MCF 10A (cell line): ENCODE measurements at regions of chr17 and their contacts with region 1.

Region 1: DNA sequence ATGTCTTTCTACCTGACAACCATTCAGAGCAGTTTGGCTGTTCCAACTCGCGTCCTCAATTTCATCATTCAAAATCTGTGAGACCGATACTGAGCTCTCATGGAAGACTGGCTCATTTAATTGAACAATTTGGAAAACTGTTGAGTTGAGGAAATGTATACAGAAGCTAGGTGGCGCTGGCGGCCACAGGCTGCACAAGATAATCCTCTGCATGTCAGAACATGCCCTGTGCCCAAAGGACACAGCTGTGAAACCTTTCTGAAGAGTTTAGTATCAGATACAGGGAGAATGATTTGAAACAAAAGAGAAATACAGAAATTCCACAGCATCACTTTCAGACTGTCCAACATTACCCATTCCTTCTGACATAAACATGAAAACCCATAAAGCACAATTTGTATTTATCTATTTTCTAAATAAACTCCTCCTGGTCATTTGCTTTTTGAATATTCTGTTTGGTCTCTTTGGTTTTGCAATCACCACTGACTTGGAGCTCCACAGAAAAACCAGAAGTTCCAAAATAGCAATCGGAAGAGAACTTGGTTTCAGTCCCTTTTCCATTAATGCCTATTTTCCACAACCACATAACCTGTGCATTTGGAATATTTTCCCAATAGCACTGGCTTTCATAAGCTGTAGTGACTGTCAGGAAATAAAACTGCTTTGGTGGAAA is 192.8 kb downstream of the MAP2K6 start:
- DNase-seq: peak; percentile 84
- H3K4me3 Mint-ChIP-seq: peak overlapping the region; percentile 13
- H3K27ac Mint-ChIP-seq: peak overlapping the region; percentile 97
- H3K4me1 Mint-ChIP-seq: peaks cover 30% of the 10 kb centered on the region
- H3K27me3 Mint-ChIP-seq: no peaks in the 10 kb centered on the region
- CTCF ChIP-seq: peak; percentile 83

Region 2: DNA sequence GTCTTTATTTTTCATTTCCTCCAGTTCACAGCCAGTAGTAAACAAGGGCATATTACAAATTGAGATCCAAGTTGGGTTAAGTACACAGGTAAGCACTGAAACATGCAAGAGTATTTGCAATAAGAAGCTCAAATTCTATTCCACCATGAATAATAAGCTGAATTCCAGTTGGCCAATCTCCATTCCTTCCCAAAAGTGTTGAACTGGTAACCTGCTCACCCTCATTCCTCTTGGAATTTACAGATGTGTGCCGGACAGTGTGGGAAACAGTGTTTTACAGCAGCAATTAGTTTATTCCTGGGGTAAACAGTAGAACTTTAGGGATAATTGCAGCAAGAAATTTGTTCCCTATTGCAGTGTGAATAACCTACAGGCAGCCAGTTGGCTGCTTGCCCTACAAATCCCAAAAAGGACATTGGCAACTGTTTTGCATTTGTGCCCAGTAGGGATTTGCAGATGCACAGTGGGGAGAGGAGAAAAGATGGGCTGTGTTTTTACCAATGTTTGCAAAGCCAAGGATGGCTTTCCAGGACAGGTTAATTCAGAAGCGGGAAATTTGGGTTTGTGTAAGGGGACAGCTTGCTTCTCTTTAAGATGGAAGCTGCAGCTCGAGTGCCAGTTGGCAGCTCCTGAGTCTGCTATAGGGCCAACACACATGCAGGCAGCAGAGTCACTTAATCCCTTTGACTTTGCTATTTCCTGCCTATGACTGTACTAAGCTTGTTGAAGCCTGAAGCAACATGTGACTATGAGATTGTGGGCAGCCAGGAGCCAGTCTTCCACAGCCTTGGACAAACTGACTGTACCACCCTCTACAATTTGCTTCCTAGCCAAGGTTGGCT is 126.1 kb after region 1 on chr17:
- CTCF ChIA-PET with region 1: interaction called, 24 read pairs
- POLR2A ChIA-PET with region 1: interaction called, 55 read pairs
- intact Hi-C with region 1: no loop called
- DNase-seq: peak; percentile 93
- H3K4me3 Mint-ChIP-seq: peak overlapping the region; percentile 37
- H3K27ac Mint-ChIP-seq: peak overlapping the region; percentile 90
- H3K4me1 Mint-ChIP-seq: peaks cover 36% of the 10 kb centered on the region
- H3K27me3 Mint-ChIP-seq: no peaks in the 10 kb centered on the region
- CTCF ChIP-seq: no peak

Region 3: DNA sequence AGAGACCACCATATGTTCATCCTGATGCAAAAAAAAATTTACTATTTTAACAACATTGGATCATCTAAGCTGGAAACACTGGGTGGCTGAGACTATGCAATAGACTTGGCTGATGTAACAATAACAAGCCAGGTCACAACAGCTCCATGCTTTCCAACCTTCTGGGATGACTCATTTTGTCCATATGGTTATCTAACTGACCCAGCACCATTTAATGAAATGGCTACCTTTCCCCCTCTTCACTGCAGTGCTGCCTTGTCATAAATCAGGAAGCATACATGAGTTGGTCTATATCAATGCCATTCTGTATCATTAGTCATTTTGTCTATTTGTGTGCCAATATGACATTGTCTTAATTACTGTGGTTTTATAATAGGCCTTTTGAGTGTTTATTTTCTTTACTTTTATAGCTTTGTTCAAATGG is 250.1 kb after region 1 on chr17:
- CTCF ChIA-PET with region 1: no interaction called
- POLR2A ChIA-PET with region 1: interaction called, 3 read pairs
- intact Hi-C with region 1: loop called (anchors 10 kb)
- DNase-seq: peak; percentile 85
- H3K4me3 Mint-ChIP-seq: no peak overlapping the region
- H3K27ac Mint-ChIP-seq: peak overlapping the region; percentile 85
- H3K4me1 Mint-ChIP-seq: peaks cover 13% of the 10 kb centered on the region
- H3K27me3 Mint-ChIP-seq: no peaks in the 10 kb centered on the region
- CTCF ChIP-seq: no peak

Region 4: DNA sequence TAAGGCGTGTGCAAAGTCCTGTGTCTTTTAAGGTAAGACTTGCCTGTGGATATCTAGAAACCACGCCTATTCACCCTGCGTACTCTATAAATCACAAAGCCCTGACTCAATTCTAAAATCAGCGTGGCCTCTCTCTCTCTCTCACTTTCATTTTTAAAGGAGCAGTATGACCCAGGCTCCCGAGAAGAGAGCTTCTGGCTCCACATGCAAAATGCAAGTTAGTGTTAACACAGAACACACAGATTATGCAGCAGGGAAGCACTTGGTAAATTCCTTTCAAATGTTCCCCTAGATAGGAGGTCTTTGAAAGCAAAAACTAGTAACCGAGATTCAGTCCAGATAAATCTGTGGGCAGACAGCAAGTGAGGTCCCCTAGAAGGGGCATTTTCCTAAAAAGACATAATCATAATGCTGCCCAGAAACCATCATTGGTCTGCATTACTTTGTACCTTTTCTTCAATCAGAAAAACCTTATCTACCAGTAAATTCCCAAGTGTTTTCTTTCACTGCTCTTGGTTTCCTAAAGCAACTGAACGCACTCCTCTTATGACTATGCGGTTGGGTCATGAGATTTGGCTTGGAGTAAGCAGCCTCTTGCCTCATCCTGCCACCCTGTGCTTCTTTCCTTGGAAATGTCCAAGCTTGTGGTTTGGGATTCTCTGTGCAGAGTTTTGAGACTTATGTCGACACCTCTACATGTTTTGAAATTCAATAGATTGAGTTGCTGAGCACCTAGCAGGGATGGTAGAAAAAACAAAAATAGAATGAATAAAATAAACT is 530.3 kb after region 1 on chr17:
- CTCF ChIA-PET with region 1: interaction called, 90 read pairs
- POLR2A ChIA-PET with region 1: interaction called, 70 read pairs
- intact Hi-C with region 1: loop called (anchors 1 kb)
- DNase-seq: peak; percentile 96
- H3K4me3 Mint-ChIP-seq: peak overlapping the region; percentile 77
- H3K27ac Mint-ChIP-seq: peak overlapping the region; percentile 98
- H3K4me1 Mint-ChIP-seq: peaks cover 28% of the 10 kb centered on the region
- H3K27me3 Mint-ChIP-seq: no peaks in the 10 kb centered on the region
- CTCF ChIP-seq: no peak

Region 5: GRCh38 chr17:70168977-70169708 is 561.8 kb after region 1 on chr17 and contains the start of gene KCNJ2:
- CTCF ChIA-PET with region 1: interaction called, 18 read pairs
- POLR2A ChIA-PET with region 1: interaction called, 8 read pairs
- intact Hi-C with region 1: loop called (anchors 1 kb)
- DNase-seq: peak; percentile 76
- H3K4me3 Mint-ChIP-seq: peak within 1 kb of the TSS; percentile 76
- H3K27ac Mint-ChIP-seq: peak within 1 kb of the TSS; percentile 10
- H3K4me1 Mint-ChIP-seq: peaks cover 34% of the 10 kb centered on the region
- H3K27me3 Mint-ChIP-seq: no peaks in the 10 kb centered on the region
- CTCF ChIP-seq: no peak
- total RNA-seq, gene KCNJ2: 0.19 and 0.54 TPM in 2 replicates

Region 6: GRCh38 chr17:70622368-70623260 is 1015.3 kb after region 1 on chr17:
- CTCF ChIA-PET with region 1: interaction called, 5 read pairs
- POLR2A ChIA-PET with region 1: no interaction called
- intact Hi-C with region 1: loop called (anchors 2 kb)
- DNase-seq: peak; percentile 75
- H3K4me3 Mint-ChIP-seq: no peak overlapping the region
- H3K27ac Mint-ChIP-seq: no peak overlapping the region
- H3K4me1 Mint-ChIP-seq: peaks cover 6% of the 10 kb centered on the region
- H3K27me3 Mint-ChIP-seq: no peaks in the 10 kb centered on the region
- CTCF ChIP-seq: peak; percentile 68